ENCODE measurements at regions of chr21 and their contacts with region 1.

Region 1: GRCh38 chr21:38511662-38512243 is 13.5 kb upstream of the ERG start:
- DNase-seq: no peak
- ATAC-seq: no peak
- H3K4me3 ChIP-seq: no peak overlapping the region
- H3K27ac ChIP-seq: no peak overlapping the region
- H3K4me1 ChIP-seq: peaks cover 0 to 9% (median 0%) of the 10 kb centered on the region in 12 donors
- H3K27me3 ChIP-seq: no peaks in the 10 kb centered on the region
- CTCF ChIP-seq: no peak
- POLR2A ChIP-seq: no peak

Region 2: DNA sequence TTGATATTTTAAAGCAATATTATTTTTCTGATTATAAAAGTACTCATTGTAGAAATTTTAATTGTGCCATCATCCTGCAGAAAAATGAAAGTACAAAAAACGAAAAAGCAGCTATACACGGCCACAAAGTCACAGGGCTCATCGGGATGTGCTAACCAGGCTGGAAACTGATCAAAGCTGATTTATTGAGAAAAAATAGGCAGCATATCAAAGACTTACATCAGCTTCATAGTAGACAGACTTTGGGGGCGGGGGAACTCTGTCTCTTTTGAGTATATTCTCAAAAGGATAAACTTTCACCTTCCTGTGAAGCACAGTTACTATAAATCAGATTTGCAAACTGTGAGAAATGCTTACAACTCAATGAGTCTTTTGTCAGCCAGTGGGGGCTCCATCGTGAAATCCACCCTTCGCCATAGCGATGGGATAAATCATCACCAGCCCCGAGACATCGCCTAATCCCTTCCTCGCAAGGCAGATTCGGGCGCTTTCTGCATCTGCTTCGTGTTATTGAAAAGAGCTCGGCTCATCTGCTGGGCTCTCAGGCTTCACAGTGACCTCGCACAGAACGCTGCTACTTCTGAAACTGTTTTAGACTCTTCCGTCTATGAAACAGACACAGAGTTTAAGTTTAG is 55.7 kb after region 1 on chr21:
- intact Hi-C with region 1: loop called in 1 of 10 experiments (anchors 10 kb)
- DNase-seq: no peak
- ATAC-seq: peak in 1 of 4 donors; percentile 56
- H3K4me3 ChIP-seq: peak overlapping the region in 5 of 12 donors; percentile 13 to 42 (median 23)
- H3K27ac ChIP-seq: no peak overlapping the region
- H3K4me1 ChIP-seq: no peaks in the 10 kb centered on the region
- H3K27me3 ChIP-seq: peaks cover 0 to 16% (median 0%) of the 10 kb centered on the region in 9 donors
- CTCF ChIP-seq: no peak
- POLR2A ChIP-seq: no peak

Region 3: GRCh38 chr21:38712071-38712470 is 200.3 kb after region 1 on chr21:
- intact Hi-C with region 1: loop called in 8 of 10 experiments (anchors 5 to 10 kb)
- DNase-seq: peak in 1 of 5 donors; percentile 40
- ATAC-seq: peak in 3 of 4 donors; percentile 55 to 62 (median 56)
- H3K4me3 ChIP-seq: no peak overlapping the region
- H3K27ac ChIP-seq: no peak overlapping the region
- H3K4me1 ChIP-seq: no peaks in the 10 kb centered on the region
- H3K27me3 ChIP-seq: peaks cover 0 to 3% (median 0%) of the 10 kb centered on the region in 9 donors
- CTCF ChIP-seq: peak; percentile 19 to 61 (median 40)
- POLR2A ChIP-seq: no peak